Aorta (tissue), 5 donors: ENCODE measurements at regions of chr6 and their contacts with region 1.

Region 1: DNA sequence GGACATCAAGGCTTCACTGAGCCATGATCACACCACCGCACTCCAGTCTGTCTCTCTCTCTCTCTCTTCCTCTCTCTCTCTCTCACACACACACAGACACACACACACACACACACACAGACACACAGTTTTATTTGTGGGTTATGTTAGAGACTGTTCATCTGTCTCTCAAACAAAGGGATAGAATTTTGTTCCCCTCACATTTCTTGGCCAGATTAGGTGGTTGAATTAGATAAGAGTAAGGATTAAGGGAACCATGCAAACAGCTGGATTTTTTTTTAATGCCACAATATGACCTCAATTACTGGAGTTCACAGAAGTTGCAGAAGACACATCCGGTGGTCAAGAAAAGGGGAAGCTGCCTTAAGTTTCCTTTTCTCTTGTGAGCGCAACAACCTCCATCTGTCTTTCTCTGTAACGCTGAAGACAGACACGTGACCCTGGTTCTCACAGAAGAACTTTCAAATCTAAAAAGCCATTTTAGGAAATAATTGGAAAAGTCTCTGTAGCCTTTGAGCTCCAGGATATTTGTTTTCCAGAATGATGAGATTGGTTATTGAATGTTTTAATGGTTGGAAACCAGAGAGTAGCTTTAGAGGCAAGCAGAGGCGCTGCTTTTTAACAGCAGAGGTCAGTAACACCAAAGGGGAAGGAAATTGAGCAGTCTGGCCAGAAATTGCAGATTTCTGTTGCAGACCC is 33.0 kb upstream of the LGSN start:
- DNase-seq: peak in 1 of 2 donors; percentile 50
- ATAC-seq: peak; percentile 59
- H3K4me3 ChIP-seq: no peak overlapping the region
- H3K27ac ChIP-seq: no peak overlapping the region
- H3K4me1 ChIP-seq: peaks cover 0 to 2% of the 10 kb centered on the region in 2 donors
- H3K27me3 ChIP-seq: no peaks in the 10 kb centered on the region

Region 2: GRCh38 chr6:63426844-63427243 is 74.1 kb after region 1 on chr6:
- intact Hi-C with region 1: no loop called
- DNase-seq: no peak
- ATAC-seq: no peak
- H3K4me3 ChIP-seq: no peak overlapping the region
- H3K27ac ChIP-seq: no peak overlapping the region
- H3K4me1 ChIP-seq: no peaks in the 10 kb centered on the region
- H3K27me3 ChIP-seq: no peaks in the 10 kb centered on the region

Region 3: DNA sequence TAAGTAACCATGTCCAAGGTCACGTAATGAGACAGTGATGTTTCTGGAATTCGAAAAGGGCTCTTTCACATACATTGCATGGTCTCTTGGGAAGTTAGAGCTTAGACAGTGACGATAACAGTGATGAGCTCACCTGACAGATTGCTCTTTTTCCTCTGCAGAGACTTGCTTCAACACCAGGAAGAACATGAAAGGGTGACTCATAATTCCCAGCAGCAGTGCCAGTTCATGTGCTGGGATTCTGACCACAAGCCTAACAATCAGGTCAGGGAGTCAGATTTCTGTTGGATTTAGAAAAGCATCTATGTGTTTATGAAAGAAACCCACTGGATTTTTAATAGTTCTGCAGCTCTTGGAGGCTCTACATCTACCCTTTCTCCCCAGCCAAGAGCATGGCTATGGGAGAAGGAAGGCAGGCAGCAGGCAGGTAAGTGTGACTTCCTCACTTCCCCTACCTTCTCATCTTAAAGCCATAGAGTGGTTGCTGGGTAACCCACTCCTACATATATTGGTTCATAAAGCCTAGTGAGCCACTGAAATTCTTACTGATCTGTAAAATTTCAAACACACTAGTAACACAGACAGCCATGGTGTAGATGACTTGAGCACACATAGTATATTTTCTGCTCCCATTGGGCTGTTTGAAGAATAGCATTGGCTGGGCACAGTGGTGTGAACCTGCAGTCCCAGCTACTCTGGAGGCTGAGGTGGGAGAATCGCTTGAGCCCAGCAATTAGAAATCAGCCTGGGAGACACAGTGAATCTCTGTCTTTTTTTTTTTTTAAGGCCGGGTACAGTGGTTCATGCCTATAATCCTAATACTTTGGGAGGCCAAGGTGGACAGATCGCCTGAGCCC is 175.2 kb after region 1 on chr6:
- intact Hi-C with region 1: no loop called
- DNase-seq: no peak
- ATAC-seq: no peak
- H3K4me3 ChIP-seq: no peak overlapping the region
- H3K27ac ChIP-seq: no peak overlapping the region
- H3K4me1 ChIP-seq: peaks cover 0 to 2% of the 10 kb centered on the region in 2 donors
- H3K27me3 ChIP-seq: no peaks in the 10 kb centered on the region

Region 4: DNA sequence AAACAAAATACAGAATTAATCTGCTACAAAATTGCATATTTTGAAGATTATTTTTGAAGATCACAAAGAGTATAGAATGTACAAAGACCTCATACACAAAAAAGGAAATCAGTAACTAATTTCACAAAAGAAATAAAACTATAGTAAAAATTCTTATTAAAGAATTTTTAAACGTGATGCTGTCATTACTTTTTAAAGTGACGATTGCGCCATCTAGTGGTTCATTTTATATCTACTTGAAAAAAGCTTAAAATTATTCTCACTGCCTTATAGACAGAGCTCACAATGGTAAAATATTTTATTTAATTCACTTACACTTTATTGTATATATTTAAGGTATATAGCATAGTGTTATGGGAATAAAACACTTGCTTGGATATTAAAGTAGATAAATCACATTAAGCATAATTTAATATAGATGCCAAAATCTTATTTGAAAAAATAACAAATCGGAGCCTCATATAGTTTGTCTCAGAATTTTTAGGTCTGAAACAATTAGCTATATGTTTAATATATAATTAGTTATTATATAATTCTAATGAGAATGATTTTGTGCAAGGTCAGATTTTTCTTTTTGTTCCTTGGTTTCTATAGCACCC is 411.7 kb after region 1 on chr6:
- intact Hi-C with region 1: loop called (anchors 2 to 10 kb)
- DNase-seq: no peak
- ATAC-seq: no peak
- H3K4me3 ChIP-seq: no peak overlapping the region
- H3K27ac ChIP-seq: no peak overlapping the region
- H3K4me1 ChIP-seq: no peaks in the 10 kb centered on the region
- H3K27me3 ChIP-seq: no peaks in the 10 kb centered on the region